Upper lobe of right lung (tissue), 1 donor: ENCODE measurements at regions of chr5 and their contacts with region 1.

Region 1: DNA sequence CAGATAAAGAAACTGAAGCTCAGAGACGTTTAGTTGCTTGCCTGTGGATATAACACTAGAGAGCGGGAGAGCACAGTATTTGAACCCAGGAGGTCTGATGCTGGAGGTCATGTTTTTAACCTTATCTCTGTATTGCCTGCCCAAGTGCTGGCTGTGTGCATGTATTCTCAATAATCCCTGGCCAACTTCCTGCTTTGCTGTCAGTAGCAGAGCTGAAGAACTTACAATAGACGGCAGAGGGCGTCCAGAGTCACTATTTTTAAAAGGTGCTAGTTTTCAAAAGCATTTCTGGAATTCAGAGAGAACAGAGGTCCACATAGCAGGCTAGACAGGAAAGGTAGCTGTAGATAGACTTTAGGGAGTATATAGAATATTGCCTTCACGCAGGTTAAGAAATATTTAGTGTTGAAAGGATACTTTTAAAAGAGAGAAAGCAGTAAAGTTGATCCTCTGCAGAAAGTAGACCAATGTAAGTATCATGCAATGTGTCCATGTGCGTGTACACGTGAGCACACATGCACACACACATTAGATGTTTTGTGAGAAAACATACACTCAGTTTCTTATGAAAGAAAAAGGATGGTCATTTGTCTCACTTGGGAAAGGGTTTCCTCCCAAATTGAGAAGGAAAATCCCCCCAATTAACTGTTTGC is 46.3 kb downstream of the PTCD2 start:
- DNase-seq: no peak
- ATAC-seq: peak; percentile 95
- H3K4me3 ChIP-seq: no peak overlapping the region
- H3K27ac ChIP-seq: no peak overlapping the region
- H3K4me1 ChIP-seq: no peaks in the 10 kb centered on the region
- H3K27me3 ChIP-seq: no peaks in the 10 kb centered on the region
- CTCF ChIP-seq: peak; percentile 74

Region 2: DNA sequence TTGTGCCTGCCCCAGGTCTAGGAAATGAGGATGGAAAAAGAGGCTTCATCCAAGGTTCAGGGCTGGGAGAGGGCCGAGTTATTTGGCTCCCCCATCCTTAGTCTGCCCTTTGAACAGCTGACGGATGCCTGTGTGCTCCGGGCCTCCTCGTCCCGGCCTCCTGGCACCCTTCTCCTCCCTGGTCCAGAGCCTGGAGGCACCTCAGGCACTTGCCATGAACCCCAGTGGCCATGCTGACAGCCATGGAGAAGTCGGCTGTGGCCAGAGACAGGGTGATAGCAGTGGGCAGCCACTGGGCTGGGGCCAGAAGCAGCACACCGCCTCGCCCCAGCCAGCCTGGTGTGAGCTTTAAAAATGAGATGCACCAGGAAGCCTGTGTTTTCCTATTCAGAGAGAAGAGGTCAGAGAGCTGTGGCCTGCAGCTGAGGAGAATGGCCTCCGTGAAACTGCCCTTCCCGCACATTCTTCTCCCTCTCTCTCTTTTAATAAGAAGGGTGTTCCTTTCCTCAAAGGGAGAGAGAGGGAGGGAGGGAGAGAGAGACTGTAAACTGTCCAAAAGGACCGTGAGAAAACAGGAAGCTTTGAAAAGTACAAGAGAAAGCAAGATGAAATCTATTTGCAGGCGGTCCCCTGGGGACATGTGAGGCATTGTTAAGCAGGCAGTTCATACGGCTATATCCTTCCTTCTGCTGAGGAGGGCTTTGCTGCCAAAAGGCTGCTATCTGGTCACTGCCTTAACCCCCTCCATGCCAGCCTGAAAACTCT is 85.5 kb after region 1 on chr5:
- intact Hi-C with region 1: no loop called
- DNase-seq: no peak
- ATAC-seq: peak; percentile 57
- H3K4me3 ChIP-seq: no peak overlapping the region
- H3K27ac ChIP-seq: peak overlapping the region; percentile 86
- H3K4me1 ChIP-seq: peaks cover 43% of the 10 kb centered on the region
- H3K27me3 ChIP-seq: no peaks in the 10 kb centered on the region
- CTCF ChIP-seq: no peak

Region 3: GRCh38 chr5:72523960-72524582 is 157.6 kb after region 1 on chr5:
- intact Hi-C with region 1: loop called (anchors 10 kb)
- DNase-seq: no peak
- ATAC-seq: peak; percentile 83
- H3K4me3 ChIP-seq: no peak overlapping the region
- H3K27ac ChIP-seq: no peak overlapping the region
- H3K4me1 ChIP-seq: no peaks in the 10 kb centered on the region
- H3K27me3 ChIP-seq: no peaks in the 10 kb centered on the region
- CTCF ChIP-seq: peak; percentile 60